Heart left ventricle (tissue), 16 donors: ENCODE measurements at regions of chr12 and their contacts with region 1.

Region 1: GRCh38 chr12:12266873-12267741 is at the start of gene LRP6:
- DNase-seq: peak; percentile 93 to 95 (median 94)
- ATAC-seq: peak; percentile 94 to 99 (median 98)
- H3K4me3 ChIP-seq: peak within 1 kb of the TSS; percentile 69 to 97 (median 84)
- H3K27ac ChIP-seq: peak within 1 kb of the TSS; percentile 94 to 100 (median 99)
- H3K4me1 ChIP-seq: peaks cover 0 to 29% (median 16%) of the 10 kb centered on the region in 12 donors
- H3K27me3 ChIP-seq: peaks cover 0 to 18% (median 0%) of the 10 kb centered on the region in 9 donors
- CTCF ChIP-seq: peak in 2 of 12 donors; percentile 9 to 13
- POLR2A ChIP-seq: peak in 1 of 2 donors; percentile 45
- total RNA-seq, gene LRP6: 13.2 to 29.6 (median 17.6) TPM

Region 2: GRCh38 chr12:12091977-12092663 is 175.0 kb before region 1 on chr12:
- intact Hi-C with region 1: loop called in 1 of 10 experiments (anchors 10 kb)
- DNase-seq: no peak
- ATAC-seq: peak in 2 of 4 donors; percentile 15 to 55
- H3K4me3 ChIP-seq: no peak overlapping the region
- H3K27ac ChIP-seq: no peak overlapping the region
- H3K4me1 ChIP-seq: peaks cover 0 to 8% (median 0%) of the 10 kb centered on the region in 12 donors
- H3K27me3 ChIP-seq: no peaks in the 10 kb centered on the region
- CTCF ChIP-seq: no peak
- POLR2A ChIP-seq: no peak

Region 3: DNA sequence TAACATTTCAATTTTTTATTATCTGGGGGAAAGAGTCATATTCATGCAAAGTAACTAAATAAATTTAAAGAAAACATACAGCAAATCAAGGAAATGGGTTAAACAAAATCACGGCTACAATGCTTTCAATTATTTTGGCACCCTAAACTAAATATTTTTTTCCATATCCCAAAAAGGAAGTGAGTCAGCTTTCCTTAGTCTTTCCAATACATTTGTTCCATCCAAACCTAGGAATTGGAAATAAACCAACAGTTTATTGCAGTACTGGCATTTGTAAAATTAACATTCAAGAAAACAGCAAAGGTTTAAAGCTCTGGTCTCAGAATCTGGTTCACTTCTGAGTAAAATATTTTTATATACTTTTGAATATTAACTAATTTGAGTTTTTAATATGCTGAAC is 107.1 kb before region 1 on chr12:
- intact Hi-C with region 1: loop called in 2 of 10 experiments (anchors 10 kb)
- DNase-seq: no peak
- ATAC-seq: no peak
- H3K4me3 ChIP-seq: no peak overlapping the region
- H3K27ac ChIP-seq: peak overlapping the region in 3 of 12 donors; percentile 8 to 23 (median 22)
- H3K4me1 ChIP-seq: peaks cover 0 to 21% (median 9%) of the 10 kb centered on the region in 12 donors
- H3K27me3 ChIP-seq: no peaks in the 10 kb centered on the region
- CTCF ChIP-seq: no peak
- POLR2A ChIP-seq: no peak

Region 4: DNA sequence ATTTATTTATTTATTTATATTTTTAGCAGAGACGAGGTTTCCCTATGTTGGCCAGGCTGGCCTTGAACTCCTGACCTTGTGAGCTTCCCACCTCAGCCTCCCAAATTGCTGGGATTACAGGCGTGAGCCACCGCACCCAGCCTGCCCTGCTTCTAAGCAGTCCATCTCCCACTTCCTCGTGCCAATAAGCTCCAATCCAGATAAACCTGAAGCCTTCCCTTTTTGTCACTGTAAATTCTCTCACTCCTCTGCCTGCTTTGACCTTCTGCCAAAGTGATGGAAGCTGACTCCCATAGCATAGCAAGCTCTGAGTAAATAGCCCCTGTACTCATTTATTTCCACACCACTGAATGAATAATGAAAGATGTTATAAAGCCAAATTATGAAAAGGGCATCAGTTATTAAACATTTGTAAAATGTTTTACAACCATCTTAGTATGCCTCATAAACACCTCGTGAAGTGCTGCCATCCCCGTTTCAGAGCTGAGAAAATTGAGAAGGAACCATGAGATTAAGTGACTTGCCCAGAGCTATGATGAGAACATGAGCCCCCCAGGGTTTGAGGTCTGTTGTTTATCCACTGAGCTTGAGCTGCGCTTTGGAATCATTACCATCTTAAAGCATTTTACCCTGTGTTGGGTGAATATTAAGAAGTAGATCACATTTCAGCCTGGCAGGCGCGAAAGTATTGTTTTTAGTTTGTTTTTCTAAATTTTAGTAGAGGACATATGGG is 52.5 kb after region 1 on chr12:
- intact Hi-C with region 1: loop called in 4 of 10 experiments (anchors 5 to 10 kb)
- DNase-seq: no peak
- ATAC-seq: peak in 2 of 4 donors; percentile 9 to 49
- H3K4me3 ChIP-seq: peak overlapping the region in 6 of 12 donors; percentile 4 to 29 (median 11)
- H3K27ac ChIP-seq: peak overlapping the region in 9 of 12 donors; percentile 2 to 67 (median 36)
- H3K4me1 ChIP-seq: peaks cover 0 to 6% (median 1%) of the 10 kb centered on the region in 12 donors
- H3K27me3 ChIP-seq: no peaks in the 10 kb centered on the region
- CTCF ChIP-seq: no peak
- POLR2A ChIP-seq: no peak

Region 5: DNA sequence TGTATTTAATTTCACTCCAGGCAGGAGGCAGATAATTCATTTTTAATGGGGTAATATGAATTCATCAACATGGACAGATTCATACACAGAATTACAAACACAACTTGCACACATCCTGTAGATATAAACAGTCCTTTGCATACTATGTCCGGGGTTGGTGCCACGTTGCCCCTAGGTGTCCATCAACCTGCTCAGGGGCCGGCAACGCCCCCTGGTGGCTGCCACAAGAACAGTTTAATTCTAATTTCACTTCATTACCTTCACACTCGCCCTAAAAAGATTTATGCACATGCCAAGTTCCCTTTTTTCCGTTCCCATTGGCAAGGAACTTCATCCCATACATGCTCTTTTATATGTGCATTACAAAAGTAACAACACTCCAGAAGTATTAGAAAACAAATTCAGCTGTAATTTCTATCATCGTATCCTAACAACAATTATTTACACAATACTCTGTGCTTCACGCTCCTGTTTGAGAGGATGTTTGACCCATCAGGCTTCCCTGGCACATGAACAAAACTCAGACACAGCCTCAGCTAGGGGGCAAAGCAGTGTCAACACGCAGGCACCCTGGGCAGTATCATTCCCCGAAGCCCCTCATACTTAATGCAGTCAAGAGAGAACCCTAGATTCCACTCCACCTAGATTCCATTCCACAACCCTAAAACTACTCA is 67.4 kb after region 1 on chr12:
- intact Hi-C with region 1: loop called in 6 of 10 experiments (anchors 5 to 10 kb)
- DNase-seq: peak; percentile 35 to 67 (median 47)
- ATAC-seq: peak in 3 of 4 donors; percentile 50 to 66 (median 52)
- H3K4me3 ChIP-seq: no peak overlapping the region
- H3K27ac ChIP-seq: peak overlapping the region in 1 of 12 donors; percentile 53
- H3K4me1 ChIP-seq: peaks cover 0 to 25% (median 11%) of the 10 kb centered on the region in 12 donors
- H3K27me3 ChIP-seq: no peaks in the 10 kb centered on the region
- CTCF ChIP-seq: peak; percentile 76 to 94 (median 82)
- POLR2A ChIP-seq: no peak